Right cardiac atrium (tissue), 5 donors: ENCODE measurements at regions of chr16 and their contacts with region 1.

Region 1: DNA sequence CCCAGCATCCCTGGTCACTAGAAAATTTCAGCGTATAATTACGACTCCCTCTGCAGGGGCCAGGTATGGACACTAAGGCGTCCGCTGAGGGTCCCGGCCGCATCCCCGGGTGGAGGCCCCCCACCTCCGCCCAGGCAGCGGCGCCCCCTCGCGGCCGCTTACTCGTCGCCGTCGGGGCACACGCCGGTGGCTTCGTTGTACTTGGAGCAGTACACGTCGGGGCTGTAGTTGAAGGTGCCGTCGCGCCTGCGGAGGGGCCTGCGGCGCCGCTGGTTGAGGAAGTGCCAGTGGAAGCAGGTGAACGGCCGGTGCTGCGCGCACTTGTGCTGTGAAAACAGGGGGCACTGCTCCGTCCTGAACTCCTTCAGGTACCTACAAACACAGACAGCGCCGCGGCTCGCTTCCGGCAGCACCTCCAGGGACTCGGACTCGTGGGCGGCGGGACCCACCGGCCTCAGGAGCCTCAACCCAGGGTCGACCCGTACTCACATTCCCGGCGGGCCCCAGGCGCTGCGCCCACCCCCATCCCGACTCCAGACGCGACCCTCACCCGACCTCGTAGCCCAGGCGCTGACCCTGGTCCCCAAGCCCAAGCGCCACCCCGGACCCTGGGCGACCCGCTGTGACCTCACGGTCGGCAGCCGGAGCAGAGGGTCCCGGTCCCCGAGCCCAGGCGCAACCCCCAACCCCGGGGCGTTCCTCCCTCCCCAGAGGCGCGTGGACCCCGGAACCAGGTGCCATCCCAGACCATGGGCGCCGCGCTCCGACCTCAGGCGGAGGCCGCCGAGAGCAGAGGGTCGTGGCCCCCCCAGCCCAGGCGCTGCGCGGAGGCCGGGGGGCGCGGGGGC is 596 bp downstream of the UNKL start:
- DNase-seq: peak; percentile 51 to 85 (median 85)
- ATAC-seq: peak; percentile 49 to 51
- H3K4me3 ChIP-seq: peak overlapping the region; percentile 95
- H3K27ac ChIP-seq: peak overlapping the region; percentile 72
- H3K4me1 ChIP-seq: no peaks in the 10 kb centered on the region
- H3K27me3 ChIP-seq: no peaks in the 10 kb centered on the region

Region 2: DNA sequence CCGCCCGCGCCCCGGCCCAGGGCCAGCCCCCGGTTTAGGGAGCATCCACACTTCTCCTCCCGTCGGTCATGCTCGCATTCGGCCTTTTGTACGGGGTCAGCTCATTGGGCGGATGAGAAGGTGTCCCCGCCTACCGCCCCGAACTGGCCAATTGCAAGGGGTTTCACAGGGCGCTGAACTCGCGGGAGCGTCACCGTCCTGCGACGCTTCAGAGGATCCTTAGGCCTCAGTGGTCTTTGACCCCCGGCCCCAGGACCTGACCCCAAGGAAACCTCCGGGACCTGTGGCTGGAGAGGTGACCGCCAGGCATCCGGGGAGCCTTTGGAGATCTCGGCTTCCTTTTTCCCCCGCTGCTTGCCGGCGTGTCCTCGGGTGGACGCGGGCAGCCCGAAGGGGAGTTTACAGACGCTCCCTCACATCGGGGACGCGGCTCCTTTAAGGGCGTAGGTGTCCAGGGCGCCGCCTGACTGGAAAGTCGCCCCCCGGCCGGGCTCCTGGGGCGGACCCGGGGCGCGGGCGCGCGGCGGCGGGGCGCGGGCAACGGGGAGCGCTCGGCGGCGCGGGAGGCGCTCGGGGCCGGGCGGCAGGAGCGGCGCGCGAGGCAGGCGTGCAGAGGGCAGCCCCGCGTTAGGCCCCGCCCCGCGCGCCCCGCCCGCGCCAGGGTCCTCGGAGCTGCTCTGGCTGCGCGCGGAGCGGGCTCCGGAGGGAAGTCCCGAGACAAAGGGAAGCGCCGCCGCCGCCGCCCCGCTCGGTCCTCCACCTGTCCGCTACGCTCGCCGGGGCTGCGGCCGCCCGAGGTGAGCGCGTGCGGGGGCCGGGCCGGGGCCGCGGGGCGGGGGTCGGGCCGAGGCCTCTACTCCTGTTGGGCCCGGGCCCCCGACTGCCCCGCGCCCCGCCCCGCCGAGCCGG is 104.7 kb before region 1 on chr16 and contains the start of gene UBE2I:
- intact Hi-C with region 1: loop called in 1 of 4 experiments (anchors 10 kb)
- DNase-seq: peak; percentile 97 to 99 (median 98)
- ATAC-seq: peak; percentile 91 to 92
- H3K4me3 ChIP-seq: peak within 1 kb of the TSS; percentile 98
- H3K27ac ChIP-seq: peak within 1 kb of the TSS; percentile 96
- H3K4me1 ChIP-seq: peaks cover 13% of the 10 kb centered on the region
- H3K27me3 ChIP-seq: no peaks in the 10 kb centered on the region
- total RNA-seq, gene UBE2I: 73.5 to 95.3 (median 87.8) TPM